ENCODE measurements at regions of chr5 and their contacts with region 1.

Region 1: GRCh38 chr5:115309751-115310370 is 13.4 kb upstream of the CCDC112 start:
- DNase-seq: no peak
- H3K4me3 Mint-ChIP-seq: no peak overlapping the region
- H3K27ac Mint-ChIP-seq: no peak overlapping the region
- H3K4me1 Mint-ChIP-seq: no peaks in the 10 kb centered on the region
- H3K27me3 Mint-ChIP-seq: peaks cover 45% of the 10 kb centered on the region

Region 2: GRCh38 chr5:115033861-115034260 is 276.0 kb before region 1 on chr5:
- intact Hi-C with region 1: no loop called
- DNase-seq: no peak
- H3K4me3 Mint-ChIP-seq: no peak overlapping the region
- H3K27ac Mint-ChIP-seq: no peak overlapping the region
- H3K4me1 Mint-ChIP-seq: no peaks in the 10 kb centered on the region
- H3K27me3 Mint-ChIP-seq: no peaks in the 10 kb centered on the region

Region 3: DNA sequence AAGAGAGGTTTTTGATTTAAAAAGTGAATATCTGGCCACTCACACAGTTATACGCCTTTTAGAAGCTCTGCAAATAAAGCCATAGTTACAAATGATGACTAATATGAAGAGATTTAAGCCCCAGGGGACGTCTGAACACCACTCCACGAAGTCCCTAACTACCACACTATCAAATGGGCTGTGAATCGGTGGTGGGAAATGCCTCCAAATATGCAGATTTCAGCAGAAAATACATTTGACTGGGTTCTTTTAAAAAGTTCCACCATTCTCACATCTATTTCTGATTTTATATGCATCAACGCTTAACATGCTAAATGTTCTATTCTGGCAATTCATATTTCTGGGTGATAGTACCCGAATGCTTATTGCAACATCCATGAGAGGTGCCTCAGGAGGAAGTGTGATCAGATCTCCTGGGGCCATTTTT is 269.9 kb after region 1 on chr5:
- intact Hi-C with region 1: loop called (anchors 1 kb)
- DNase-seq: no peak
- H3K4me3 Mint-ChIP-seq: no peak overlapping the region
- H3K27ac Mint-ChIP-seq: no peak overlapping the region
- H3K4me1 Mint-ChIP-seq: no peaks in the 10 kb centered on the region
- H3K27me3 Mint-ChIP-seq: peaks cover 4% of the 10 kb centered on the region

Region 4: DNA sequence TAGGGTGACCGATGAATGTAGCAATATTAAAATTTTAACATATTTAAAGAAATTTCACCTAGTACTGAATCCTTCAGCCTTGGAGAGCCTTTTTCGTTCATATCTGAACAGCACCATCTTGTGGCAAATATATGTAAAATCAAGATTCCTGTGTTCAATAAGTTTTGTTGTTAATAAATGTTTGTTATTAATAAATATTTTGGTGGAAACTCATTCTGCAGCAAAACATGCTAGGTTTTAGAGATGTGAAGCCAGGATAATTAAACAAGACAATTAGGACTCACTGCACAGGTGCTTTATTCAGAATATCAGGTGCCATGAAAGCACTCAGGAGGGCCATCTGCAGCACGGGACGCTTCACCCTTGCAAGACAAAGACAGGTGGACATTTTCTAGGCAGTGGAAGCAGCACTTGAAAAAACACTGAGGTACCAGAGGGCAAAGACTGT is 276.8 kb after region 1 on chr5:
- intact Hi-C with region 1: loop called (anchors 1 kb)
- DNase-seq: no peak
- H3K4me3 Mint-ChIP-seq: no peak overlapping the region
- H3K27ac Mint-ChIP-seq: no peak overlapping the region
- H3K4me1 Mint-ChIP-seq: no peaks in the 10 kb centered on the region
- H3K27me3 Mint-ChIP-seq: peaks cover 7% of the 10 kb centered on the region

Region 5: DNA sequence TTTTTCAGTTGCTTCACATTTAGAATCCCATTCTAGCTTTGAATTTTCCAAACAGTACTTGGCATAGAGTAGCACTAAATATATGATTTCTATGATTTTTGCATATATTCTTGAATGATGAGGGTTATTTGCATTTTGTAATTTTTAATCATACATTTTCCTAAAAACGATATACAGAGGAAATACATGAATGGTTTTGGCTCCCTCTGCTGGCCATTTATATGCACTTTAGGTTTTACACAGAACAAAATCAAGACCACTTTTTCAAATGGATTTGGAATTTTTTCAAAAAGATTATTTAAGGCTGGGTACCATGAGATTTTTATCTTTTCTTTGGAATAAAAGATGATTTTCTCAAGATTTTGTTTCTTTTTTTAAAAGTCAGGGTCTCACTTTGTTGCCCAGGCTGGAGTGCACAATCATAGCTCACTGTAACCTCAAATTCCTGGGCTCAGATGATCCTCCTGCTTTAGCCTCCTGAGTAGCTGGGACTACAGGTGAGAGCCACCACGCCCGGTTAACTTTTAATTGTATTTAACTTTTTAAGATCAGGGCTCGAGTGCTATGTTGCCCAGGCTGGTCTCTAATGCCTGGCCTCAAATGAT is 758.3 kb after region 1 on chr5:
- intact Hi-C with region 1: loop called (anchors 5 kb)
- DNase-seq: peak; percentile 76
- H3K4me3 Mint-ChIP-seq: no peak overlapping the region
- H3K27ac Mint-ChIP-seq: no peak overlapping the region
- H3K4me1 Mint-ChIP-seq: no peaks in the 10 kb centered on the region
- H3K27me3 Mint-ChIP-seq: peaks cover 40% of the 10 kb centered on the region